ENCODE measurements at regions of chr7 and their contacts with region 1.

Region 1: GRCh38 chr7:139645572-139646523 is 122.4 kb downstream of the CLEC2L start:
- DNase-seq: peak; percentile 72 to 93 (median 80)
- ATAC-seq: peak; percentile 73
- H3K4me3 ChIP-seq: no peak overlapping the region
- H3K4me3 Mint-ChIP-seq: peak overlapping the region in 8 of 10 donors; percentile 44 to 77 (median 61)
- H3K27ac ChIP-seq: no peak overlapping the region
- H3K27ac Mint-ChIP-seq: peak overlapping the region in 7 of 9 donors; percentile 46 to 92 (median 64)
- H3K4me1 ChIP-seq: peaks cover 0 to 78% of the 10 kb centered on the region in 2 donors
- H3K4me1 Mint-ChIP-seq: peaks cover 61 to 96% (median 87%) of the 10 kb centered on the region in 7 donors
- H3K27me3 ChIP-seq: no peaks in the 10 kb centered on the region
- H3K27me3 Mint-ChIP-seq: no peaks in the 10 kb centered on the region

Region 2: GRCh38 chr7:139602143-139602722 is 43.6 kb before region 1 on chr7:
- CTCF ChIA-PET with region 1: interaction called, 19 read pairs
- POLR2A ChIA-PET with region 1: no interaction called
- intact Hi-C with region 1: loop called in 1 of 2 experiments (anchors 1 kb)
- DNase-seq: peak in 6 of 9 donors; percentile 16 to 46 (median 44)
- ATAC-seq: peak; percentile 73
- H3K4me3 ChIP-seq: no peak overlapping the region
- H3K4me3 Mint-ChIP-seq: no peak overlapping the region
- H3K27ac ChIP-seq: no peak overlapping the region
- H3K27ac Mint-ChIP-seq: no peak overlapping the region
- H3K4me1 ChIP-seq: no peaks in the 10 kb centered on the region
- H3K4me1 Mint-ChIP-seq: peaks cover 0 to 3% (median 0%) of the 10 kb centered on the region in 7 donors
- H3K27me3 ChIP-seq: no peaks in the 10 kb centered on the region
- H3K27me3 Mint-ChIP-seq: no peaks in the 10 kb centered on the region

Region 3: GRCh38 chr7:139626817-139627216 is 19.0 kb before region 1 on chr7:
- CTCF ChIA-PET with region 1: interaction called, 31 read pairs
- POLR2A ChIA-PET with region 1: interaction called, 6 read pairs
- intact Hi-C with region 1: no loop called
- DNase-seq: peak in 7 of 9 donors; percentile 29 to 71 (median 63)
- ATAC-seq: peak; percentile 77
- H3K4me3 ChIP-seq: peak overlapping the region; percentile 3
- H3K4me3 Mint-ChIP-seq: peak overlapping the region; percentile 61 to 84 (median 74)
- H3K27ac ChIP-seq: peak overlapping the region; percentile 64
- H3K27ac Mint-ChIP-seq: peak overlapping the region; percentile 81 to 98 (median 96)
- H3K4me1 ChIP-seq: peaks cover 17 to 66% of the 10 kb centered on the region in 2 donors
- H3K4me1 Mint-ChIP-seq: peaks cover 58 to 90% (median 81%) of the 10 kb centered on the region in 7 donors
- H3K27me3 ChIP-seq: no peaks in the 10 kb centered on the region
- H3K27me3 Mint-ChIP-seq: no peaks in the 10 kb centered on the region

Region 4: GRCh38 chr7:139737221-139738100 is 91.6 kb after region 1 on chr7:
- CTCF ChIA-PET with region 1: interaction called, 15 read pairs
- POLR2A ChIA-PET with region 1: no interaction called
- intact Hi-C with region 1: no loop called
- DNase-seq: peak in 6 of 9 donors; percentile 11 to 48 (median 42)
- ATAC-seq: peak; percentile 62
- H3K4me3 ChIP-seq: peak overlapping the region; percentile 35
- H3K4me3 Mint-ChIP-seq: peak overlapping the region; percentile 49 to 86 (median 76)
- H3K27ac ChIP-seq: peak overlapping the region; percentile 56
- H3K27ac Mint-ChIP-seq: peak overlapping the region; percentile 85 to 97 (median 90)
- H3K4me1 ChIP-seq: peaks cover 0 to 33% of the 10 kb centered on the region in 2 donors
- H3K4me1 Mint-ChIP-seq: peaks cover 39 to 92% (median 87%) of the 10 kb centered on the region in 7 donors
- H3K27me3 ChIP-seq: no peaks in the 10 kb centered on the region
- H3K27me3 Mint-ChIP-seq: no peaks in the 10 kb centered on the region

Region 5: DNA sequence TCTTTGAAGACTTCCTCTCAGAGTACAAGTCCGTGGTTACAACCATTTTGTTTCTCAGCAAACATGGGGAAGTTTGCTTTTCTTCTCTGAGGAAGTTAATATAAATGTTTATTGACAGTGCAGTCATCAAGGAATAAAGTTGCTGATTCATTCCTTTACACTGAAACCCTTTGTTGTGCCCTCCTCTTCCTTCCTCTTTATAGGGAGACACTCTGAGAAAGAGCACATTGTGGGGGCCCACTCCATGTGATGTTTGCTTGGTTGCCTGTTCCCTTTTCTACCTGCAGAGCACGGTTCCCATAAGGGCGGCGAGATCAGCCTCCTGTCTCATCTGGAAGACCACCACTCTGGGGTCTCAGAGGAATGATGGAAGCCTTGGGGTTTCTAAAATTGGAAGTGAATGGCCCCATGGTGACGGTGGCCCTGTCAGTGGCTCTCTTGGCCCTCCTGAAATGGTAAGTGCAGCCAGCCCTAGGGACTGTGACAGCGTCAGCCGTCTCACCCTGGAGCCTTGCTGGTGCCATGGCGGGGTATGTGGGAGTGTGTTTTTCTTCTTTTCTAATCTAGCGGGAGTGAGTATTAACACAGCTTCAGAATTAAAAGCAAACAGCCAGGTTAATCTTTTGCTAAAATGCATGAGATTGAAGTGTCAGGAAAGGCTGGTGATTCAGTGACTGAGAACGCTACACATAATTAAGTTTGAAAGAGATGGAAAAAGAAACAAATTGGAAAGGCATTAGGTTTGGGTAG is 183.4 kb after region 1 on chr7 and contains the start of gene TBXAS1:
- CTCF ChIA-PET with region 1: interaction called, 5 read pairs
- POLR2A ChIA-PET with region 1: no interaction called
- intact Hi-C with region 1: loop called (anchors 1 to 10 kb)
- DNase-seq: peak in 3 of 9 donors; percentile 6 to 14 (median 12)
- ATAC-seq: peak; percentile 87
- H3K4me3 ChIP-seq: no peak within 1 kb of the TSS
- H3K4me3 Mint-ChIP-seq: peak within 1 kb of the TSS; percentile 19 to 78 (median 68)
- H3K27ac ChIP-seq: no peak within 1 kb of the TSS
- H3K27ac Mint-ChIP-seq: peak within 1 kb of the TSS in 8 of 9 donors; percentile 67 to 90 (median 83)
- H3K4me1 ChIP-seq: peaks cover 0 to 8% of the 10 kb centered on the region in 2 donors
- H3K4me1 Mint-ChIP-seq: peaks cover 10 to 30% (median 26%) of the 10 kb centered on the region in 7 donors
- H3K27me3 ChIP-seq: no peaks in the 10 kb centered on the region
- H3K27me3 Mint-ChIP-seq: peaks cover 0 to 16% (median 5%) of the 10 kb centered on the region in 5 donors
- total RNA-seq, gene TBXAS1: 2.6 to 70.9 (median 6.7) TPM

Region 6: DNA sequence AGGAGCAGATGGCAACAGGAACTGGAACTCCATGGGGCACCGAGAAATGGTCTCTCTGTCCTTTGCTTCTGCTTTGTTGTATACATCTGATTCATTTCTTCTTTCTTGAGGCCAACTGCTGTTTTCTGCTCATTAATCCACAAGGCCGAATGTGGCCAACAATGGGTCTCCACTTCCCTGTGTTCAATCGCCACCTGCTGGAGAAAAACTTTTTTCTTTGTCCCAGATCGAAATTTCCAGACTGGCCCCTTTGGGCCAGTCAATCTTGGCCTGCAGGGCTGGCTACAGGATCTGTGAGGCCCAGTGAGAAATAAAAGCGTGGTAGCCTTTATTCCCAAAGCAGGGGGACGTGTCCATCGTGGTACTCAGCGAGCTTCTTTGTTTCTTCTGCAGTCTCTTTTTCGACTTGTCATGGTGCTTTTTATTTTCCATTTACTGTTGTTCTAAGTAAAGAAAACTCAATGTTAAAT is 358.1 kb after region 1 on chr7:
- CTCF ChIA-PET with region 1: interaction called, 35 read pairs
- POLR2A ChIA-PET with region 1: no interaction called
- intact Hi-C with region 1: loop called (anchors 1 kb)
- DNase-seq: peak in 7 of 9 donors; percentile 17 to 42 (median 33)
- ATAC-seq: peak; percentile 37
- H3K4me3 ChIP-seq: no peak overlapping the region
- H3K4me3 Mint-ChIP-seq: no peak overlapping the region
- H3K27ac ChIP-seq: no peak overlapping the region
- H3K27ac Mint-ChIP-seq: peak overlapping the region in 1 of 9 donors; percentile 80
- H3K4me1 ChIP-seq: no peaks in the 10 kb centered on the region
- H3K4me1 Mint-ChIP-seq: peaks cover 0 to 6% (median 0%) of the 10 kb centered on the region in 7 donors
- H3K27me3 ChIP-seq: no peaks in the 10 kb centered on the region
- H3K27me3 Mint-ChIP-seq: no peaks in the 10 kb centered on the region

Measured in naive thymus-derived CD4-positive, alpha-beta T cell (primary cell).